Heart left ventricle (tissue), 16 donors: ENCODE measurements at regions of chr2 and their contacts with region 1.

Region 1: GRCh38 chr2:216698895-216699294 is 3.5 kb upstream of the IGFBP5 start:
- DNase-seq: peak in 1 of 5 donors; percentile 41
- ATAC-seq: peak; percentile 16 to 64 (median 55)
- H3K4me3 ChIP-seq: no peak overlapping the region
- H3K27ac ChIP-seq: peak overlapping the region in 8 of 12 donors; percentile 5 to 88 (median 30)
- H3K4me1 ChIP-seq: peaks cover 0 to 69% (median 30%) of the 10 kb centered on the region in 12 donors
- H3K27me3 ChIP-seq: peaks cover 0 to 37% (median 0%) of the 10 kb centered on the region in 9 donors
- CTCF ChIP-seq: peak; percentile 48 to 84 (median 71)
- POLR2A ChIP-seq: no peak

Region 2: GRCh38 chr2:216235462-216235861 is 463.4 kb before region 1 on chr2:
- intact Hi-C with region 1: no loop called
- DNase-seq: no peak
- ATAC-seq: no peak
- H3K4me3 ChIP-seq: no peak overlapping the region
- H3K27ac ChIP-seq: no peak overlapping the region
- H3K4me1 ChIP-seq: no peaks in the 10 kb centered on the region
- H3K27me3 ChIP-seq: no peaks in the 10 kb centered on the region
- CTCF ChIP-seq: no peak
- POLR2A ChIP-seq: no peak

Region 3: DNA sequence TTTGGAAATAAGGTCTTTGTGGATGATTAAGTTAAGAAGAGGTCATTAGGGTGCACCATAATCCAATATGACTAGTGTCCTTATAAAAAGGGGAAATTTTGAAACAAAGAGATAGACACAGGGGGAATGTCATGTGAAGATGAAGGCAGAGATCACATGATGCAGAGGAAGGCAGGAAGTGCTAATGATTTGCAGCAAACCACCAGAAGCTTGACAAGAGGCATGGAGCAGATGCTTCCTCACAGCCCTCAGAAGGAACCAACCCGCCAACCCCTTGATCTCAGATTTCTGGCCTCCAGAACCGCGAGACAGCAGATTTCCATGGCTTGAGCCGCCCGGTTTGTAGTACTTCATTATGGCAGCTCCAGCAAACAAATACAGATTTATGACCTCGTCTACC is 304.0 kb before region 1 on chr2:
- intact Hi-C with region 1: no loop called
- DNase-seq: no peak
- ATAC-seq: peak in 1 of 4 donors; percentile 7
- H3K4me3 ChIP-seq: no peak overlapping the region
- H3K27ac ChIP-seq: peak overlapping the region in 1 of 12 donors; percentile 55
- H3K4me1 ChIP-seq: no peaks in the 10 kb centered on the region
- H3K27me3 ChIP-seq: no peaks in the 10 kb centered on the region
- CTCF ChIP-seq: no peak
- POLR2A ChIP-seq: no peak

Region 4: DNA sequence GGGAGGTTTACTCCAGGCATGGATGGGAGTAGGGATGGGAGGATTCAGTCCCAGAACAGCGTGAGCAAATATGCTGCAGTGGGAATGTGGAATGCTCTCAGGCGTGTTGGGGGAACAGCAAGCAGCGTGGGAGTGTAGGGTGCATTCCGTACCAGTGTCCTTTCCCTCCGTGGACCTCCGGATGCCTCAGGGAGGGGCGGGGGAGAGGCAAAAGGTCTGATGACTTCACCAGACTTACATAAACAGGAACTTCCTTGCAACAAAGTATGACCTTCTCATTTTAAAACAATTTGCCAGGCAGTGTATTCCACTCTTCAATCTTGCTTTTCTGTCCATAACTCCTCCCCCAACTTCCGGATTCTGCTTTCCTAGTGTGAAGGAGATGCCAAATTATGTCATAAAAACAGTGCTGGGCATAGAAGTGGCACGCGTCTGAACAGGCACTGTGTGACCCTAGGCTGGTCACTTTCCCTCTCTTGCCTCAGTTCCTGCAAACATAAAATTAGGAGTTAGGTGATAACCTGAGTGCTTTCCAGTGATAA is 163.4 kb before region 1 on chr2:
- intact Hi-C with region 1: no loop called
- DNase-seq: peak; percentile 70 to 81 (median 79)
- ATAC-seq: peak; percentile 71 to 89 (median 81)
- H3K4me3 ChIP-seq: peak overlapping the region in 2 of 12 donors; percentile 2 to 14
- H3K27ac ChIP-seq: peak overlapping the region; percentile 79 to 91 (median 87)
- H3K4me1 ChIP-seq: peaks cover 18 to 72% (median 49%) of the 10 kb centered on the region in 12 donors
- H3K27me3 ChIP-seq: no peaks in the 10 kb centered on the region
- CTCF ChIP-seq: no peak
- POLR2A ChIP-seq: peak in 1 of 2 donors; percentile 21

Region 5: DNA sequence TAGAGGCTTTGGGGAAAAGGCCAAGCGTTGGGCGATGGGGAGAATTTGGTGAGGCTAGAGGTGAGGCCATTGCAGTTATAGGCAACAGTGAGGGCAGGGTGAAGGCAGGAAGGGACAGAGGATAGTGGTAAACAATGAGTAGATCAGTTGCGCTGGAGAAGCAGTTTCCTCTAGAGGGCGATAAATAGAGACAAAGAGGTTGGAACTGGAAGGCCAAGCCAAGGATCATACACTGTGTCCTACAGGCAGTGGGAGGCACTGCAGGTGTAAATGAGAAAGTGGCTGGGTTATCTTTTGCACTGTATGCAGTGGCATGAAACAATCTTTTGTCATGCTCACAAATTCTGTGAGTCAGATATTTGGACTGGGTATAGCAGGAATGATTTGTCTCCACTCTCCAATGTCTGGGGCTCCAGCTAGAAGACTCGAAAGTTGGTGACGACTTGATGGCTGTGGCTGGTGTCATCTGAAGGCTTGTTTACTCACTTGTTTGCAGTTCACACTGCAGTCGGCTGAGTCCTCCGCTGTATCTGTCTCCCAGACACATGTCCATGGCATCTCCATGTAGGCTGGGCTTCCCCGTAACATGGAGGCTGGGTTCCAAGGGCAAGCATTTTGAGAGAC is 78.9 kb after region 1 on chr2:
- intact Hi-C with region 1: loop called in 5 of 10 experiments (anchors 2 to 10 kb)
- DNase-seq: no peak
- ATAC-seq: no peak
- H3K4me3 ChIP-seq: no peak overlapping the region
- H3K27ac ChIP-seq: no peak overlapping the region
- H3K4me1 ChIP-seq: peaks cover 6 to 39% (median 24%) of the 10 kb centered on the region in 12 donors
- H3K27me3 ChIP-seq: no peaks in the 10 kb centered on the region
- CTCF ChIP-seq: peak; percentile 24 to 58 (median 42)
- POLR2A ChIP-seq: no peak

Region 6: DNA sequence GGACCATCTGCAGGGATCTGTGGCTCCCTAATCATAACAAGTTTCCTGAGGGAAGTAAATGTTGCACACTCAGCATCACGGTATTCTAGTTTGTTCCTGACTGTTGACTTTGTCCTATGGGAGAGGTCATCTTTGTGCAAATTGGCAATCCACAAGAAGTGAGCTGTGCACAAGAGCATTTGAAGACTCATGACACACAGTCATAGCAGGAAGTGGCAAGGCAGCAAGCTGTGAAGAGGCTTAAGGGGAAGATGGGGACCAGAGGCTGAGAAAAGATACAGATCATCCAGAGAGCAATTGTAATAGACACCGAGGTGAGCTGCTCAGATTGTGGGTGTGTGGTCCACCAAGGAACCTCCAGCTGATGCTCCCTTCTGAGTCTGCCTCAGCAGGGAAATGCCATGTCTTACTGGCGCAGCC is 158.2 kb after region 1 on chr2:
- intact Hi-C with region 1: loop called in 2 of 10 experiments (anchors 5 to 10 kb)
- DNase-seq: no peak
- ATAC-seq: no peak
- H3K4me3 ChIP-seq: no peak overlapping the region
- H3K27ac ChIP-seq: no peak overlapping the region
- H3K4me1 ChIP-seq: peaks cover 0 to 38% (median 19%) of the 10 kb centered on the region in 12 donors
- H3K27me3 ChIP-seq: no peaks in the 10 kb centered on the region
- CTCF ChIP-seq: no peak
- POLR2A ChIP-seq: no peak

Region 7: GRCh38 chr2:216989340-216990129 is 290.6 kb after region 1 on chr2:
- intact Hi-C with region 1: loop called in 7 of 10 experiments (anchors 5 to 10 kb)
- DNase-seq: no peak
- ATAC-seq: peak in 1 of 4 donors; percentile 43
- H3K4me3 ChIP-seq: no peak overlapping the region
- H3K27ac ChIP-seq: no peak overlapping the region
- H3K4me1 ChIP-seq: peaks cover 0 to 29% (median 8%) of the 10 kb centered on the region in 12 donors
- H3K27me3 ChIP-seq: no peaks in the 10 kb centered on the region
- CTCF ChIP-seq: peak in 6 of 12 donors; percentile 4 to 28 (median 22)
- POLR2A ChIP-seq: no peak

Region 8: DNA sequence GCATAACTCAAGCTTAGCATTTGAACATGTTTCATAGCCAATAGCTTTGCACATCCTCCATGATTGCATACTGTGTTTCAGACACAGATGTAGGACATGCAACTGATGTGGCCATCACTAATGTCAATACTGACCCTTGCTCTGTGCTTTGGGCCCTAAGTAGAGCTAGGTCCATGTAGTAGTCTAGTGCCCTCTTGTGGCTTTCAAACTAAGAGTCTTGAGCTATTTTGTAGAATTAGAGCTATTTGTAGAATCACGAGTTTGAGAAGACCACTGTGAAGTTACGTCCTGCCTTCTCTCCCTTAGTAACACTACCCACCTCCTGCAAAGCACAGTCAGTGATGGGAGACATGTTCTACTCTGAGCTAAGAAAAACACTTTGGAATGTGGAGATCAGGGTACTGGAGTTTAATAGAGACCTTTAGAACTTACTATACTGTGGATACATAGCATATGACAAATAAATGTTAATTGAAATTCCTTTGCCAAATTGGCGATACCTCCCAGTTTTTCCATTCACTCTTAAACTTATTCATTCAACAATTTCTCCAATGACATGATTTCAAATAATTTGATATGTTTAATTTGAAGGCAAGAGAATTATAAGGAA is 467.5 kb after region 1 on chr2:
- intact Hi-C with region 1: loop called (anchors 1 to 5 kb)
- DNase-seq: peak in 1 of 5 donors; percentile 22
- ATAC-seq: peak; percentile 55 to 81 (median 68)
- H3K4me3 ChIP-seq: no peak overlapping the region
- H3K27ac ChIP-seq: no peak overlapping the region
- H3K4me1 ChIP-seq: peaks cover 0 to 24% (median 6%) of the 10 kb centered on the region in 12 donors
- H3K27me3 ChIP-seq: peaks cover 0 to 52% (median 0%) of the 10 kb centered on the region in 9 donors
- CTCF ChIP-seq: peak; percentile 51 to 82 (median 64)
- POLR2A ChIP-seq: no peak

Region 9: DNA sequence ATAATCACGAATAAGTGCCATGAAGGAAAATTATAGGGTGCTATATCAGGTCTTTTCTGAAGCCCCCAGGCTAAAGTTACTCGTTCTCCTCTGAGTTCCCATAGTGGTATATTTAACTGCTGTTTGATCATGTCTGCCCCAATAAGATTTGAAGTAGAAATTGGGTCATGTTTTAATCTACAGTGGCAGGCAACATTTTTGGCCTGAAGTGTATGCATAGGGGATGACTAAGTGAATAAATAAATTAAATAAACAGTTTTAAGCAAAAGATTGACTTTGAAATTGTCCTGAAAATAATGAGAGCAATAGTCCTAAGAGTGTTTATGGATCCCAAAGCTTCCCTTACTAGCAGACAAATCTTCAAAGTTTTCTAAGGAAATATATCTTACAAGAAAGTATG is 803.0 kb after region 1 on chr2:
- intact Hi-C with region 1: loop called in 1 of 10 experiments (anchors 5 kb)
- DNase-seq: no peak
- ATAC-seq: no peak
- H3K4me3 ChIP-seq: no peak overlapping the region
- H3K27ac ChIP-seq: no peak overlapping the region
- H3K4me1 ChIP-seq: no peaks in the 10 kb centered on the region
- H3K27me3 ChIP-seq: no peaks in the 10 kb centered on the region
- CTCF ChIP-seq: no peak
- POLR2A ChIP-seq: no peak

Region 10: GRCh38 chr2:217713395-217714286 is 1014.7 kb after region 1 on chr2:
- intact Hi-C with region 1: loop called in 7 of 10 experiments (anchors 5 kb)
- DNase-seq: peak; percentile 76 to 88 (median 82)
- ATAC-seq: peak; percentile 42 to 82 (median 77)
- H3K4me3 ChIP-seq: no peak overlapping the region
- H3K27ac ChIP-seq: peak overlapping the region in 11 of 12 donors; percentile 35 to 74 (median 58)
- H3K4me1 ChIP-seq: peaks cover 0 to 28% (median 17%) of the 10 kb centered on the region in 12 donors
- H3K27me3 ChIP-seq: no peaks in the 10 kb centered on the region
- CTCF ChIP-seq: peak; percentile 90 to 99 (median 97)
- POLR2A ChIP-seq: no peak